GM12878 (cell line): ENCODE measurements at regions of chr17 and their contacts with region 1.

Region 1: GRCh38 chr17:76246080-76247066 is 6.1 kb upstream of the RNF157 start:
- DNase-seq: peak; percentile 98
- ATAC-seq: peak; percentile 100
- H3K4me3 ChIP-seq: no peak overlapping the region
- H3K27ac ChIP-seq: peak overlapping the region; percentile 80
- H3K4me1 ChIP-seq: peaks cover 34% of the 10 kb centered on the region
- H3K27me3 ChIP-seq: no peaks in the 10 kb centered on the region
- CTCF ChIP-seq: no peak
- EP300 ChIP-seq: peak; percentile 68 to 81
- POLR2A ChIP-seq: peak; percentile 83
- RAD21 ChIP-seq: 0 out of 2 replicates have a peak, but pooled peaks have one; percentile 1

Region 2: GRCh38 chr17:75584849-75585175 is 661.6 kb before region 1 on chr17:
- CTCF ChIA-PET with region 1: no interaction called
- POLR2A ChIA-PET with region 1: no interaction called
- RAD21 ChIA-PET with region 1: no interaction called
- SMC1A ChIA-PET with region 1: no interaction called
- in situ Hi-C with region 1: no loop called
- intact Hi-C with region 1: no loop called
- DNase-seq: no peak
- ATAC-seq: no peak
- H3K4me3 ChIP-seq: no peak overlapping the region
- H3K27ac ChIP-seq: no peak overlapping the region
- H3K4me1 ChIP-seq: 0 out of 2 replicates have a peak, but pooled peaks cover 4% of the 10 kb centered on the region
- H3K27me3 ChIP-seq: peaks cover 5 to 9% of the 10 kb centered on the region in 2 experiments
- CTCF ChIP-seq: no peak
- EP300 ChIP-seq: no peak
- POLR2A ChIP-seq: no peak
- RAD21 ChIP-seq: no peak

Region 3: DNA sequence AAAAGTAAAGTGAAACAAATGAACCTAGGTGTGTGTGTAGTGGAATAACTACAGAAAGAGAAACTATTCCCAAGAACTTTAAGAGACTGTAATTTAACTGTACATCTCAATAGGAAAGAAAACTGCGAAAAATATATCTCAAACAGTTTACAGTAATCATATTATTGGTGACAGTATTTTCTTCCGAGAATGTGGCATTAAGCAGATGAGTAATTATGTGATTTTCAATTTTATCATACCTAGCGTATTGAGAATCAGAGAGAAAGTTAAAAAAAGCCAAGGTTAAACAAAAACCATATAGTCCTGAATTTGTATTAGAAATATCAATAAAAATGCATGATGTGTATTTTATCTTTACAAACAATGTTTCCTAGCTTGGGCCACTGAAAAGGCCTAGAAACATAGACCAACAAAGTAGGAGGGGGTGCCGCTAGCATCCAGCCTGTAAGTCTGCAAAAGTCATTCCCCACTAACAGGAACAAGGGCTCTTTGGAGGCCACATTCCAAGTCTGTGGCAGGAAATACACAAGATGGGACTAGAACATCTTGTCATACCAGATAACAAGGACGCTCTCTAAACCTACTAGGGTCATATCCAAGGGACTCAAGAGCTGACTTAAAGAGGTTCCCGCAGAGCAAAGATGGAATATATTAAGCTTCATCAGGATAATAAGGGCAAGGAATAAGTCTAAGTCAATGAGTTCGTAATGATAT is 26.5 kb before region 1 on chr17:
- CTCF ChIA-PET with region 1: no interaction called
- POLR2A ChIA-PET with region 1: no interaction called
- RAD21 ChIA-PET with region 1: no interaction called
- SMC1A ChIA-PET with region 1: interaction called, 11 read pairs
- in situ Hi-C with region 1: no loop called
- intact Hi-C with region 1: no loop called
- DNase-seq: no peak
- ATAC-seq: no peak
- H3K4me3 ChIP-seq: no peak overlapping the region
- H3K27ac ChIP-seq: no peak overlapping the region
- H3K4me1 ChIP-seq: no peaks in the 10 kb centered on the region
- H3K27me3 ChIP-seq: no peaks in the 10 kb centered on the region
- CTCF ChIP-seq: no peak
- EP300 ChIP-seq: no peak
- POLR2A ChIP-seq: no peak
- RAD21 ChIP-seq: no peak

Region 4: GRCh38 chr17:76232342-76232741 is 14.0 kb before region 1 on chr17:
- CTCF ChIA-PET with region 1: interaction called, 7 read pairs
- POLR2A ChIA-PET with region 1: interaction called, 6 read pairs
- RAD21 ChIA-PET with region 1: interaction called, 14 read pairs
- SMC1A ChIA-PET with region 1: interaction called, 24 read pairs
- in situ Hi-C with region 1: no loop called
- intact Hi-C with region 1: no loop called
- DNase-seq: no peak
- ATAC-seq: no peak
- H3K4me3 ChIP-seq: no peak overlapping the region
- H3K27ac ChIP-seq: no peak overlapping the region
- H3K4me1 ChIP-seq: peaks cover 9% of the 10 kb centered on the region
- H3K27me3 ChIP-seq: no peaks in the 10 kb centered on the region
- CTCF ChIP-seq: no peak
- EP300 ChIP-seq: no peak
- POLR2A ChIP-seq: no peak
- RAD21 ChIP-seq: no peak